ENCODE measurements at regions of chr15 and their contacts with region 1.

Region 1: DNA sequence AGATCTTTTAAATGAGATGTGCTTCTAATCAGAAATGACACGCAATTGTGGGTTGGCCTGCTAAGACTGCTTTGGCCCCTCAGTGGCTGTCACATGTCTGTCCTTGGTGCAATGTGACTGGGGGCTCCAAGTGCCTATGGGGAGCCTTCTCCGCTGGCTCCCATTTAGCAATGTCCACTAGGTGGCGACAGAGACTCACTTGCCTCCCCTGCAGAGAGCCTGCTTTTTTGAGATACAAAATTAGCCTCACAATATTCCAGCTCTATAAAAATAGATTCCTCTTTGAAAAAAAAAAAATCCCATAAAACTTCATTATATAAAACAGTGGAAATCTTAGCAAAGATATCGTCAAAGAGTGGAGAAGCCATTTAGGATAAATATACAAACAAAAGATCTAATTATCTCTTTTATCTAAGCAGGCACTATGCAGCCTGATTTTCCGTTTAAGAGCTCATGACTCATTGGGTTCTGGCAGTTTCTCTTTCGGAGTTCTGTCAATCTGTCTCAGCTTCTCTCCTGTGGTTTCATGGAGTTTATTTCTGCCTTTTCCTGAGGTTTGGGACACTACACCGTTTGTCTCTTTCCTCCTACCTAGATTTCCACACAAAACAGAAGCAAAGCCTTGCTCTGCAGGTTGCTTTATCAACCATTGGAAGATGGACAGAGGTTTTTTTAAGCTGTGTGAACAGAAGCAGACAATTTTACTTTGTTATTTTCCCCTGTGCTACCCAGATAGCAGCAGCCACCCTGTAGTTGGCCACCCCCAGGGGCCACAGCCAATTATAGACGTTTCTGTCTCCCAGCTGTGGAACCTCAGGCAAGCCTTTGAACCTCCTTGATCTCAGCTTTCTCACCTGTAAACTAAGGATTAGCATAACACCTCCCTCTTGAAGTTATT is 68.4 kb upstream of the TNFAIP8L3 start:
- DNase-seq: peak; percentile 84
- H3K4me3 ChIP-seq: peak overlapping the region; percentile 6 to 33; a peak in 3 of 4 replicates
- H3K27ac ChIP-seq: peak overlapping the region; percentile 25 to 30; a peak in 2 of 4 replicates
- H3K4me1 ChIP-seq: peaks cover 0 to 6% of the 10 kb centered on the region in 2 experiments; a peak in 2 of 4 replicates
- H3K27me3 ChIP-seq: no peaks in the 10 kb centered on the region; the same call in 1 of the 2 replicates
- CTCF ChIP-seq: peak; percentile 99
- EP300 ChIP-seq: no peak
- RAD21 ChIP-seq: peak; percentile 91

Region 2: DNA sequence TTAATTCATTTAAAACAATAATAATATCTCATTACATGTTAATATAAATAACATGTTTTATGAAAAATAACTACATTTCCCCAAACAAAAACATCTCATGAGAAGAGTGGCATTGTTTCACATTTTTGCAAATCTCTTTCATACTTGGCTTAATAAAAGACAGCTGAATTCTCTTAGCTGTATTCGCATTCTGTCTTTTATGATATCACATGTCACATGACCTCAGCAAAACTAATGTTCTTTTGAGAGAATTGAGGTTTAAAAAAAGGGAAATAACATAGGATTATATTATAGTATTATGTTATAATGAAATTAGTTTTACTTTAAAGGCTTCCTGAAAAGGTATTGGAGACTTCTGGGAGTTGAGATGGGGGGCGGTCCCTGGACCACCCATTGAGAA is 349.2 kb before region 1 on chr15:
- CTCF ChIA-PET with region 1: no interaction called
- POLR2A ChIA-PET with region 1: no interaction called
- DNase-seq: no peak
- H3K4me3 ChIP-seq: no peak overlapping the region
- H3K27ac ChIP-seq: no peak overlapping the region
- H3K4me1 ChIP-seq: 0 out of 4 replicates have a peak, but pooled peaks cover 0 to 1% of the 10 kb centered on the region in 2 experiments
- H3K27me3 ChIP-seq: no peaks in the 10 kb centered on the region
- CTCF ChIP-seq: no peak
- EP300 ChIP-seq: no peak
- RAD21 ChIP-seq: no peak

Region 3: DNA sequence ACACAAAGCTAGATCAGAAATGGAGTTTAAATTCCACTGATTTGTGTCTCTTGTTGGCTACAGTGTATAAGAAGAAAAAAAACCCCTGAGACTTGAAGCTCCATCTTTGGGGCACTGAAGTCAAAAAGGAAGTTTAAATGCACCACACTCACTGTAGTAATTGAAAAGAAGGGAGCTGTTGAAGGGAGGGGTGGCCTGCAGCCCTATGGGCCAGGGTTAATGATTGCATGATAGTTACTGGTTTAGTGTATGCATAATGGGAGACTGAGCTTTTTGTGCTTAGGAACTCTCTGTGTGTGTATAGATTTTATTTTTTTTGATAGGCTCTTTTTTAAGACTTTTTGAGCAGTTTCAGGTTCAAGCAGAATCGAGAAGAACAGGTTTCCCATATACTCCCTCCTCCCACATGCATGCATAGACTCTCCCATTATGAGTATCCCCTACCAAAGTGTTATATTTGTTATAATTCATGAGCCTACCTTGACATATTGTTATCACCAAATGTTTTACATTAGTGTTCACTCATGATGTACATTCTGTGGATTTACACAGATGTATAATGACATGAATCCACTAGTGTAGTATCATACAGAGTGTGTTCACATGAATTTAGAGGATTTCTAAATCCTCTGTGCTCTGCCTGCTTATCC is 156.7 kb before region 1 on chr15:
- CTCF ChIA-PET with region 1: no interaction called
- POLR2A ChIA-PET with region 1: no interaction called
- DNase-seq: no peak
- H3K4me3 ChIP-seq: no peak overlapping the region
- H3K27ac ChIP-seq: no peak overlapping the region
- H3K4me1 ChIP-seq: no peaks in the 10 kb centered on the region
- H3K27me3 ChIP-seq: no peaks in the 10 kb centered on the region
- CTCF ChIP-seq: no peak
- EP300 ChIP-seq: no peak
- RAD21 ChIP-seq: no peak

Region 4: GRCh38 chr15:51132384-51133139 is 30.6 kb before region 1 on chr15:
- CTCF ChIA-PET with region 1: interaction called, 15 read pairs
- POLR2A ChIA-PET with region 1: no interaction called
- DNase-seq: peak; percentile 45
- H3K4me3 ChIP-seq: peak overlapping the region in 1 of 2 experiments; percentile 47; a peak in 1 of 4 replicates
- H3K27ac ChIP-seq: peak overlapping the region in 1 of 2 experiments; percentile 48; a peak in 2 of 4 replicates
- H3K4me1 ChIP-seq: peaks cover 3 to 4% of the 10 kb centered on the region in 2 experiments; a peak in 2 of 4 replicates
- H3K27me3 ChIP-seq: no peaks in the 10 kb centered on the region
- CTCF ChIP-seq: peak; percentile 97
- EP300 ChIP-seq: no peak
- RAD21 ChIP-seq: peak; percentile 65

Region 5: GRCh38 chr15:51185213-51186159 is 22.4 kb after region 1 on chr15:
- CTCF ChIA-PET with region 1: interaction called, 284 read pairs
- POLR2A ChIA-PET with region 1: no interaction called
- DNase-seq: no peak
- H3K4me3 ChIP-seq: no peak overlapping the region
- H3K27ac ChIP-seq: no peak overlapping the region
- H3K4me1 ChIP-seq: no peaks in the 10 kb centered on the region
- H3K27me3 ChIP-seq: peaks cover 23% of the 10 kb centered on the region; the same call in 1 of the 2 replicates
- CTCF ChIP-seq: no peak
- EP300 ChIP-seq: no peak
- RAD21 ChIP-seq: no peak

Region 6: DNA sequence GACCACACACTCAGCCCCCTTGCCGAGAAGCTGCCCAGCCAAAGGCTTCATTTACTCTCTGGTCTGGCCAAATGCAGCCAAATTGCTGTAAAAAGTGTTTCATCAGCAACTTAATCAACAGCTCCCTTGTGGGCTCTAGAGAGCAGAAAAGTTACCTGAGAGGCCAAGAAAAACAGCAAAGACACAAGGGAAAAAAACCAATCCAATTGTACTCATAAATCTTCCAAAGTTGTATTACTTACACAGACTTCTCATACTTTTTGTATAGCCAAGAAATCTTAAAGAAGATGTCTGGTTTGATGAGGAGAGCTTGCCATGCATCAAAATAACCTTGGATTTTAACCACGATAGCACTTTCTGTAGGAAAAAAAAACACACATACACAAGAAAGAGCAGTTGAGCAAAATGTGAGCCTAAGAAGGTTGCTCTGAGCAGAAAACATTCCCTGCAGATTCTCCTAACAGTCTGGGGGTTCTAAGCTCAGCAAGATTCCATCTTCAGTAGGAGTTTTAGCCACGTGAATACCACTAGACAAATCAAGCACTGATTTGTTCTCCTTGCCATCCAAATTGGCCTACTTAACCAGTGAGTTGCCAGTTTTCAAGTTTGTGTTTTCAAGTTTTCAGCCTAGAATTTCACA is 55.3 kb after region 1 on chr15:
- CTCF ChIA-PET with region 1: interaction called, 15 read pairs
- POLR2A ChIA-PET with region 1: no interaction called
- DNase-seq: no peak
- H3K4me3 ChIP-seq: no peak overlapping the region
- H3K27ac ChIP-seq: no peak overlapping the region
- H3K4me1 ChIP-seq: no peaks in the 10 kb centered on the region
- H3K27me3 ChIP-seq: peaks cover 9% of the 10 kb centered on the region; the same call in 1 of the 2 replicates
- CTCF ChIP-seq: no peak
- EP300 ChIP-seq: no peak
- RAD21 ChIP-seq: no peak

Region 7: GRCh38 chr15:51341366-51342226 is 178.5 kb after region 1 on chr15 and contains the start of gene GLDN:
- CTCF ChIA-PET with region 1: no interaction called
- POLR2A ChIA-PET with region 1: no interaction called
- DNase-seq: peak; percentile 80
- H3K4me3 ChIP-seq: peak within 1 kb of the TSS in 1 of 2 experiments; percentile 35; a peak in 1 of 4 replicates
- H3K27ac ChIP-seq: no peak within 1 kb of the TSS
- H3K4me1 ChIP-seq: peaks cover 0 to 10% of the 10 kb centered on the region in 2 experiments; a peak in 1 of 4 replicates
- H3K27me3 ChIP-seq: peaks cover 12% of the 10 kb centered on the region; the same call in 1 of the 2 replicates
- CTCF ChIP-seq: no peak
- EP300 ChIP-seq: no peak
- RAD21 ChIP-seq: no peak
- polyA plus RNA-seq, gene GLDN: not detected in 2 replicates

Region 8: GRCh38 chr15:51363383-51363782 is 200.3 kb after region 1 on chr15:
- CTCF ChIA-PET with region 1: interaction called, 10 read pairs
- POLR2A ChIA-PET with region 1: no interaction called
- DNase-seq: no peak
- H3K4me3 ChIP-seq: no peak overlapping the region
- H3K27ac ChIP-seq: no peak overlapping the region
- H3K4me1 ChIP-seq: peaks cover 0 to 3% of the 10 kb centered on the region in 2 experiments; a peak in 2 of 4 replicates
- H3K27me3 ChIP-seq: no peaks in the 10 kb centered on the region
- CTCF ChIP-seq: no peak
- EP300 ChIP-seq: no peak
- RAD21 ChIP-seq: no peak

Region 9: DNA sequence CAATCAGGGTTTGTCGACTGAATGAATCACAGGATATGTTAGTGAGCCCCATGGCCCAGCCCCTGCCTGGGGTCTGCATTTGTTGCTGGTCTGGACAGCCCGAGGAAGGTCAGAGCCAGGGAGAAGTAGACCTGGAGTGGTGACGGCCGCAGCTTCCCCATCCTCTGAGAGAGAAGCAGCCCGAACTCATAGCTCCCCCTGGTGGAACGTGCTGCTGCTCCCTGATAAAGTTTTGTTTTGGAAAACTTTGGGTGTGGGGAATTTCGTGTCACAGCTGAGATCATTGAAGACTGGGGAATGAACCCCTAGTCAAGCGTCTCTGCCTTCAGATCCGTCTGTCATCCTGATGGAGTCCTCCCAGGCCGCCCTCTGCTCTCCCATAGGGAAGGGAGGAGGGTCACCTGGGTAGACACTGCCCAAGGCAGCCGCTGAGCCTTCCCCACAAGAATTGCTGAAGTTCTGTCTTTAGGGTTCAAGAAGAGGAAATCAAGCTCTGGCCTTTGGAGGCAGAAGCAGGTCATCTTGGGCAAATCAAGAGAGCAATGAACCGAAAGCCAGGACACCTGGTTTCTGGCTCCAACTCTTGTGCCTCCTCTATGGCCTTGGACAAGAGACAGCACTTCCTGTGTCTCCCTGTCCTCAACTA is 238.9 kb after region 1 on chr15:
- CTCF ChIA-PET with region 1: interaction called, 110 read pairs
- POLR2A ChIA-PET with region 1: no interaction called
- DNase-seq: peak; percentile 39
- H3K4me3 ChIP-seq: no peak overlapping the region
- H3K27ac ChIP-seq: no peak overlapping the region
- H3K4me1 ChIP-seq: no peaks in the 10 kb centered on the region
- H3K27me3 ChIP-seq: peaks cover 11% of the 10 kb centered on the region
- CTCF ChIP-seq: peak; percentile 58
- EP300 ChIP-seq: no peak
- RAD21 ChIP-seq: peak; percentile 54

Measured in SK-N-SH (cell line).